Activated CD4-positive, alpha-beta memory T cell treated with anti-CD3 and anti-CD28 coated beads, Interleukin-2, amount 10 ng/mL, durations not matched to agents 7 days and 5 days (primary cell): ENCODE measurements at regions of chr15 and their contacts with region 1.

Region 1: GRCh38 chr15:41915255-41915994 is 21.6 kb upstream of the SPTBN5 start:
- DNase-seq: no peak
- H3K4me3 Mint-ChIP-seq: no peak overlapping the region
- H3K27ac Mint-ChIP-seq: no peak overlapping the region
- H3K4me1 Mint-ChIP-seq: peaks cover 18% of the 10 kb centered on the region
- H3K27me3 Mint-ChIP-seq: no peaks in the 10 kb centered on the region

Region 2: GRCh38 chr15:41894251-41894790 is 21.1 kb before region 1 on chr15:
- CTCF ChIA-PET with region 1: no interaction called
- POLR2A ChIA-PET with region 1: no interaction called
- DNase-seq: no peak
- H3K4me3 Mint-ChIP-seq: peak overlapping the region; percentile 54
- H3K27ac Mint-ChIP-seq: peak overlapping the region; percentile 94
- H3K4me1 Mint-ChIP-seq: peaks cover 54% of the 10 kb centered on the region
- H3K27me3 Mint-ChIP-seq: no peaks in the 10 kb centered on the region

Region 3: GRCh38 chr15:41904541-41905005 is 10.9 kb before region 1 on chr15:
- CTCF ChIA-PET with region 1: interaction called, 12 read pairs
- POLR2A ChIA-PET with region 1: no interaction called
- DNase-seq: peak; percentile 80
- H3K4me3 Mint-ChIP-seq: no peak overlapping the region
- H3K27ac Mint-ChIP-seq: peak overlapping the region; percentile 52
- H3K4me1 Mint-ChIP-seq: peaks cover 13% of the 10 kb centered on the region
- H3K27me3 Mint-ChIP-seq: no peaks in the 10 kb centered on the region